PC-9 (cell line): ENCODE measurements at regions of chr13 and their contacts with region 1.

Region 1: GRCh38 chr13:64471916-64472315 is 2758.2 kb downstream of the PCDH9 start:
- DNase-seq: peak in 1 of 2 experiments; percentile 46
- H3K4me3 ChIP-seq: no peak overlapping the region
- H3K27ac ChIP-seq: no peak overlapping the region
- H3K4me1 ChIP-seq: no peaks in the 10 kb centered on the region
- H3K27me3 ChIP-seq: no peaks in the 10 kb centered on the region
- CTCF ChIP-seq: peak; percentile 72

Region 2: DNA sequence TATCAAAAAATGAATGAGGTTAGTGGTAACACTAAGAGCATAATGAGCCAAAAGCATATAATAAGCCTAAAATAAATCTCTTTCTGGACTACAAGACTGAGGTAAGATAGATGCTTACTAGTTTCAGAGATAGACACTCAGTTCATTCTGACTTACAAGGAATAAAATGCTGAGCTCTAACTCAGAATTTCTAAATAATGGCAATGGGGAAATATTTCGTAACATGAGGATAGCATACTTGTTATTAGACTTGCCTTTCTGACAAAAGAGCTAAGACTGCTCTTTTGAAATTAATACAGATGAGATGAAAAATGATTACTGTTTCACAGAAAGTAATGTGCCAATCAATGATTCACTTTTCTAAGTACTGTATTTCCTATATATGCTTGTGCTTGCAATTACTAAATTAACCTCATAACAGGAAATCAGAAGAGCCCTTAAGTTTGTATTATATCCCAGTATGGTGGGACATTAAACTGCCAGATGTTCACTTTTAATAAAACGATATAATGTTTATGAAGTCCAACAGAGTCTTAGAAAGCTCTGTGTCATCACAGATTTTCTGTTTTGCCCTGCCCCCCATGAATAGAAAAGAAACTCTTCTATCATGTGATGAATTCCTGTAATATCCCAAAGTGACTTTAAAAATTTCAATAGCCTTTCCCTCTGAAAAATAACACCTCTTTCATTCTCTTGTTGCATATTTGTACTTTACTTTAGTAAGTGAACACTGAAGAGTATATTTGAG is 285.2 kb before region 1 on chr13:
- CTCF ChIA-PET with region 1: no interaction called
- POLR2A ChIA-PET with region 1: no interaction called
- intact Hi-C with region 1: no loop called
- DNase-seq: no peak
- H3K4me3 ChIP-seq: no peak overlapping the region
- H3K27ac ChIP-seq: no peak overlapping the region
- H3K4me1 ChIP-seq: no peaks in the 10 kb centered on the region
- H3K27me3 ChIP-seq: no peaks in the 10 kb centered on the region
- CTCF ChIP-seq: no peak

Region 3: DNA sequence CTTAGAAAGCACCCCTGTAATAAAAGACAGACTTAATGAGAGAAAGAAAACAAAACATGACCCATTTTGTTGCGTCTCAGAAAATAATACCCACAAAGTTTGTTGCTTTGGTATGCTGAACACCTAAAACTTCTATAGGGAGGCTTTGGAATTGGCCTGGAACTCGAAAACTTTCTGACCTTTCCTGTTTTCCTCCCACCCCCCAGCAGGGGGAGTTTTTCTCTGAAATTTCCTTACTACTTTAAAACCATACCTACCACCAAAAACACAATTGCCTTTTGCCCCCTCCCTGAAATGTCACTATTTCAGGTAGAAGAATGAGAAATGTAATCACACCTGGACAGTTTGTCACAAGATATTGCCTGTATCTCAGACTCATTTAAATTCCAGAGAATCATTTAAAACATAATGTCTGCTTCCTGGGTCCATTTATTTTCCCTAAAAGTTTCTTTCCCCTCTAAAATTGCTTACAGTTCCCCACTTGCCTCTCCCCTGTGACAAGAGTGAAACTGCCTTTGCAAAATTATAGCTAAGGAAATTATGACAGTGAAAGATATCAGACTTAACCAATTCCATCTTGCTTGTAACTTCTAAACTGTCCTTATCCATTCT is 58.1 kb after region 1 on chr13:
- CTCF ChIA-PET with region 1: interaction called, 3 read pairs
- POLR2A ChIA-PET with region 1: no interaction called
- intact Hi-C with region 1: loop called (anchors 10 kb)
- DNase-seq: no peak
- H3K4me3 ChIP-seq: no peak overlapping the region
- H3K27ac ChIP-seq: no peak overlapping the region
- H3K4me1 ChIP-seq: no peaks in the 10 kb centered on the region
- H3K27me3 ChIP-seq: no peaks in the 10 kb centered on the region
- CTCF ChIP-seq: peak; percentile 70

Region 4: DNA sequence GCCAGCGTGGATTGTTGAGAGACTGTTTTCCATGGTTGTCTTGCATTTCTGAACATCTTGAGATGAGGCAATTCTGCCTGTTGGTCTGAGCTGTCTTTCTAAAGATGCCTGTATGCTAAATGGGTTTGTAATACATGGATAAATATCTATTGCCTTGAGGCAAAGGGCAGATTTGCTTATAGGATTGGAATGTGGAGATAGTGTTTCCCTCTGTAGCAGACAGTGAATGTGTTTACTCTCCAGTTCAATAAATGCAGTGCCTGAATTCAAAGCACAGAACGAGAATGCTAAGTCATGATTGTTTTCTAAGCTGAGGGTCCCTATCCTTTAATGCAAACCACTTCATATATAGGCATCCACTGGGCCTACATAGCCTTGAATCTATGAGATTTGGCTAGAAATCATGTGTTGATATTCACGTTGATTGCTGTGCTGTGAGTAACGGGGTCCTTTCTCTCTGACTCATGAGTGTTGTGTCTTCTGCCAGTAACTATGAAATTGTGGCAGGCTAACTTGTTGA is 203.4 kb after region 1 on chr13:
- CTCF ChIA-PET with region 1: no interaction called
- POLR2A ChIA-PET with region 1: no interaction called
- intact Hi-C with region 1: loop called (anchors 2 kb)
- DNase-seq: peak; percentile 36 to 84
- H3K4me3 ChIP-seq: no peak overlapping the region
- H3K27ac ChIP-seq: peak overlapping the region; percentile 71
- H3K4me1 ChIP-seq: peaks cover 10% of the 10 kb centered on the region
- H3K27me3 ChIP-seq: no peaks in the 10 kb centered on the region
- CTCF ChIP-seq: no peak

Region 5: DNA sequence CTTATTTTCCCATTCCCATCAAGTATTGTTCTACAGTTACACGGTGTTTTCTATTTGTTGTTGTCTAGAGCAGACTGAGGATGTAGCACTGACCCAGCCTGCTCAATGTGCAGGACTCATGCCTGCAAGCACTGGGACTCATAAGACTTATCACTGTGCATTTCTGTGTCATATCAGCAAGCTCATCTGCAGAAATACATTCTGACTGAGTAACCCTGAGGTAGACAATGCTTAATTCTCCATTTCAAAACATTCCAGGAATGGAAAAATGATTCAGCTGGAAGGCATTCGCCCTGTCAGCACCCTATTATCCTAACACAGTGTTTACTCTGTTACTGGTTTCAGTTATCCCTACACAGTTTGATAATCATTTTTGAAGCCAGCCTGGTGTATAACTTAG is 251.8 kb after region 1 on chr13:
- CTCF ChIA-PET with region 1: no interaction called
- POLR2A ChIA-PET with region 1: no interaction called
- intact Hi-C with region 1: loop called (anchors 2 kb)
- DNase-seq: peak; percentile 72 to 95
- H3K4me3 ChIP-seq: no peak overlapping the region
- H3K27ac ChIP-seq: peak overlapping the region; percentile 59
- H3K4me1 ChIP-seq: peaks cover 23% of the 10 kb centered on the region
- H3K27me3 ChIP-seq: no peaks in the 10 kb centered on the region
- CTCF ChIP-seq: no peak

Region 6: DNA sequence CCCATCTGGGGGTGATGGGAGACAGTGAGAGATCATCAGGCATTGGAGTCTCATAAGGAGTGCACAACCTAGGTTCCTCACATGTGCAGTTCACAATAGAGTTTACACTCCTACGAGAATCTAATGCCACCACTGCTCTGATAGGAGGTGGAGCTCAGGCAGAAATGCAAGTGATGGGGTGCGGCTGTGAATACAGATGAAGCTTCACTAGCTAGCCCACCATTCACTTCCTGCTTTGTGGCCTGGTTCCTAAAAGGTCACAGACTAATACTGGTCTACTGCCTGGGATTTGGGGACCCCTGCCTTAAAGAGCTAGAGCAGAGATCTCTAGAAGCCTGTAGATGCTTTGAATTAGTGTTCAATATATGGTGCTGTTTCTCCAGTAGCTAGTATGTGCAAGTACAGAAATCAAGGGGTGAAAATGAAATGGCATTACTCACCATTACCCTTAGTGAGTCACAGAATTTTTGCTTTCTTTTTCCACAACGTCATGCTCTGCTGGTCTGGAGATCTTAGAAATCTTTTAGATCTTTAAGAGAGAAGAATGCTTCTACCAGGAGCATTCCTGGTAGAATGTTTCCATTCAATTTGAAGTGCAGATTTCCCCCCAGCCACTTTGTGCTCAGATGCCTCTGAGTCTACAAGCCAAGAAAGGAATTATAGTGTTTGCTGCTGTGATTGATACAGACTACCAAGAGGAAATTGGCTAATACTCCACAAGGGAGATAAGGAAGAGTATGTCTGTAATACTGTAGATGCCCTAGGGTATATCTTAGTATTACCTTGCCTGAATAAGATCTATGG is 457.0 kb after region 1 on chr13:
- CTCF ChIA-PET with region 1: interaction called, 3 read pairs
- POLR2A ChIA-PET with region 1: no interaction called
- intact Hi-C with region 1: loop called (anchors 5 kb)
- DNase-seq: peak; percentile 34 to 44
- H3K4me3 ChIP-seq: 0 out of 2 replicates have a peak overlapping the region, but pooled peaks have one; percentile 21
- H3K27ac ChIP-seq: peak overlapping the region; percentile 35
- H3K4me1 ChIP-seq: peaks cover 13% of the 10 kb centered on the region; the same call in 1 of the 2 replicates
- H3K27me3 ChIP-seq: no peaks in the 10 kb centered on the region
- CTCF ChIP-seq: no peak

Region 7: GRCh38 chr13:65638572-65639168 is 1166.8 kb after region 1 on chr13:
- CTCF ChIA-PET with region 1: interaction called, 6 read pairs
- POLR2A ChIA-PET with region 1: no interaction called
- intact Hi-C with region 1: loop called (anchors 5 kb)
- DNase-seq: no peak
- H3K4me3 ChIP-seq: no peak overlapping the region
- H3K27ac ChIP-seq: no peak overlapping the region
- H3K4me1 ChIP-seq: no peaks in the 10 kb centered on the region
- H3K27me3 ChIP-seq: no peaks in the 10 kb centered on the region
- CTCF ChIP-seq: peak; percentile 77